ENCODE measurements at regions of chr21 and their contacts with region 1.

Region 1: DNA sequence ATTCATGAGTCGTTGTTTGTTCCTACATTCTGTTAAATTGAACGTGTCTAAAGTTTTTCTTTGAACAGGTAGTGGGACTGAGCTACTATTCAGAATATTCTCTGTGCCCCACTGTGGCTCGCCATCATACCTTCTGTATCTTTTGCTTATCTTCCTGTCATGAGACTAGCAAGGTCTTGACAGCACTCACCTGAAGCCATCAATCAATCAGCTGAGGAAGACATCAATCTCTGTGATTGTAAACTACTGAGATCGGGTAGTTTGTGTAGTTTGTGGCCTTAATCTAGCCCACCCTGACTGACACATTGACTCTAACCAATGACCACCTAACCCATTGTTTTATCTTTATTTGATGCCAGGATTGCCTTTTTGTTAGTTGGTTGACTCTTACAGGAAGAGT is 17.7 kb upstream of the RUNX1 start:
- DNase-seq: no peak
- ATAC-seq: no peak
- H3K4me3 ChIP-seq: no peak overlapping the region
- H3K27ac ChIP-seq: no peak overlapping the region
- H3K4me1 ChIP-seq: no peaks in the 10 kb centered on the region
- H3K27me3 ChIP-seq: no peaks in the 10 kb centered on the region
- CTCF ChIP-seq: no peak

Region 2: DNA sequence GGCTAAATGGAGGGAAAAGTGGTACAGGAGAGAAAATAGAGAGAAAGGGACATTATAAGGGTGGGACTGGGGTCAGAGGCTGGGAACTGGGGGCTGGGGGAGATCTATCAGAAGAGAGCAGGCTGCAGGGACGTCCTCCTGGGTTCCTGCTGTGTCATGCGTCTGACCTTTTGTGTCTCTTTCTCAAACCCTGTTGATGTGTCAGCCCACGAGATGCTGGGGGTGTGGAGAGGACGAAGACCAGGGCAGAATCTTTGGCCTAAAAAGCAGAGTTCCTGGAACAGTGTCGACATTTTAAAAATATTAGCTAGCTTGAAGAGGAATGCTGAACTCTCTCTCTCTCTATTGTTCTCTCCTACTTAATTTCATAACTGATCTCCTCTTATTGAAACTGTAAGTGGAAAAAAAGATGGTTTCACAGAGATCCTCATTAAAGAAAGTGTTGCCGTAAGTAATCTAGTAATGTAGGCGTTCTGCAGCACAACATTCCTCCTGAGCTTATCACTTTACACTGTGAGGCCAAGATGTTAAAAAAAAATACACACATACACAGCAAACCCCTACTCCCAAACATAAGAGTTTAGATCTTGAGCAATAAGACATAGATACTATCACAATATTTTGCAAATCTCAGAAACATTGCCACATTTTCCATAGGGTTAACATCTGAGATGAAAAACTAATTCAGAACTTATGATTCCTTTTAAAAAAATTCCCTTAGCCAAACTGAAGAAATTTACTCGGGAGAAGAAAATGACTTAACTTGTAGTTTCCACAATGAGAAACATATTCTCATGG is 70.3 kb before region 1 on chr21:
- CTCF ChIA-PET with region 1: no interaction called
- POLR2A ChIA-PET with region 1: no interaction called
- in situ Hi-C with region 1: no loop called
- intact Hi-C with region 1: no loop called
- DNase-seq: no peak
- ATAC-seq: no peak
- H3K4me3 ChIP-seq: no peak overlapping the region
- H3K27ac ChIP-seq: no peak overlapping the region
- H3K4me1 ChIP-seq: no peaks in the 10 kb centered on the region
- H3K27me3 ChIP-seq: no peaks in the 10 kb centered on the region
- CTCF ChIP-seq: no peak

Region 3: DNA sequence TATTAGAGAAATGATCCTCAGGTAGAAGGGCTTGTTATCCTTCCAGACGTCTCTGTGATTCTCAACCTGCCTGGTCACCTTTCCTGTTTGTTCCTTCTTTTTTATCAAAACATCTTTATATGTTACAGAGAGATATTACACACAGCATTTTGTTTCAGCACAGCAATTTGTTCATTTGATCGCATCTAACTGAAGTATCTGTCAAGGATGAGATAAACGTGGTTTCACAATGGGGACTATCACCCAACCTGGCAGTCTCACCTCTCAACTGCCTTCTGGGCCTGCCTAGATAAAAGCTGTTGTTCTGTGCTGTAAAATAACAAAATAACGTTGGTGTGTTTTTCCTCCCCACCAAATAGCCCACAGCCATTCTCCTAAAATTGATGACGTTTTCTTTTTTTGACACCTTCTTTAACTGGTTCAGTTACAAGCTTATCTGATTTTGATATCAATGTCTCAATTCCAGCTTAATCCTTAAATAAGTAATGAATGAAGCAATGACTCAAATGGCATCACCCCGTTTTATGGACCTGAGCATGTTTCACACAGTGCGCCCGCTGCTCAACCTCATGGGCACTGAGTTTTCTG is 350.1 kb after region 1 on chr21:
- CTCF ChIA-PET with region 1: no interaction called
- POLR2A ChIA-PET with region 1: interaction called, 10 read pairs
- in situ Hi-C with region 1: no loop called
- intact Hi-C with region 1: no loop called
- DNase-seq: no peak
- ATAC-seq: no peak
- H3K4me3 ChIP-seq: no peak overlapping the region
- H3K27ac ChIP-seq: no peak overlapping the region
- H3K4me1 ChIP-seq: no peaks in the 10 kb centered on the region
- H3K27me3 ChIP-seq: no peaks in the 10 kb centered on the region
- CTCF ChIP-seq: no peak

Region 4: GRCh38 chr21:35438643-35439404 is 372.0 kb after region 1 on chr21:
- CTCF ChIA-PET with region 1: no interaction called
- POLR2A ChIA-PET with region 1: no interaction called
- in situ Hi-C with region 1: no loop called
- intact Hi-C with region 1: no loop called
- DNase-seq: no peak
- ATAC-seq: no peak
- H3K4me3 ChIP-seq: no peak overlapping the region
- H3K27ac ChIP-seq: no peak overlapping the region
- H3K4me1 ChIP-seq: no peaks in the 10 kb centered on the region
- H3K27me3 ChIP-seq: peaks cover 2% of the 10 kb centered on the region; the same call in 1 of the 2 replicates
- CTCF ChIP-seq: no peak

Measured in Panc1 (cell line).